ENCODE measurements at regions of chr12 and their contacts with region 1.

Region 1: GRCh38 chr12:52645120-52645761 is 6.8 kb downstream of the KRT2 start:
- DNase-seq: peak; percentile 2
- H3K4me3 ChIP-seq: no peak overlapping the region
- H3K27ac ChIP-seq: no peak overlapping the region
- H3K4me1 ChIP-seq: no peaks in the 10 kb centered on the region
- H3K27me3 ChIP-seq: peaks cover 2% of the 10 kb centered on the region
- CTCF ChIP-seq: no peak

Region 2: GRCh38 chr12:52543985-52544883 is 101.0 kb before region 1 on chr12:
- CTCF ChIA-PET with region 1: no interaction called
- dilution Hi-C with region 1: loop called (anchors 5 kb)
- in situ Hi-C with region 1: no loop called
- intact Hi-C with region 1: no loop called
- DNase-seq: no peak
- H3K4me3 ChIP-seq: no peak overlapping the region
- H3K27ac ChIP-seq: no peak overlapping the region
- H3K4me1 ChIP-seq: peaks cover 14% of the 10 kb centered on the region
- H3K27me3 ChIP-seq: no peaks in the 10 kb centered on the region
- CTCF ChIP-seq: peak; percentile 20 to 26

Region 3: GRCh38 chr12:52598966-52599365 is 46.3 kb before region 1 on chr12:
- CTCF ChIA-PET with region 1: no interaction called
- dilution Hi-C with region 1: loop called (anchors 10 kb)
- in situ Hi-C with region 1: no loop called
- intact Hi-C with region 1: no loop called
- DNase-seq: no peak
- H3K4me3 ChIP-seq: no peak overlapping the region
- H3K27ac ChIP-seq: no peak overlapping the region
- H3K4me1 ChIP-seq: no peaks in the 10 kb centered on the region
- H3K27me3 ChIP-seq: peaks cover 14% of the 10 kb centered on the region
- CTCF ChIP-seq: no peak

Region 4: DNA sequence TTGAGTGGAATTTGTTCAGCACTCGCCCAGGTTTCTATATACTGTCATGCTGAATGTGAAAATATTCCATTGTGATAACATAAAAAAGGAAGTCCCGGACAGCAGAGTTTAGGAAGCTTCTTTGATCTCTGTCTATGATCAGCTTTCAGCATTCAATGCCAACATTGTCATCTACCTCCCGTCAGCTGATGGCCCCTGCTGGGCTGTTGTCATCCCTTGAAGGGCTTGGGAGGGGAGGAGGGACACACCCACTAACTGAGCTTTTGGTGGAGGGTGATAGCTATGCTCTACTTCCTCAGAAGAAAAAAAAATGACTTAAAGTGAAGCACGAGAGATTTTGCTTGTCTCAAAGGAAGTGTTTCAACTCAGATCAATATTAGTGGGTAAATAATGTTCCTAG is 62.8 kb after region 1 on chr12:
- CTCF ChIA-PET with region 1: no interaction called
- dilution Hi-C with region 1: loop called (anchors 5 kb)
- in situ Hi-C with region 1: no loop called
- intact Hi-C with region 1: no loop called
- DNase-seq: no peak
- H3K4me3 ChIP-seq: no peak overlapping the region
- H3K27ac ChIP-seq: no peak overlapping the region
- H3K4me1 ChIP-seq: no peaks in the 10 kb centered on the region
- H3K27me3 ChIP-seq: peaks cover 2% of the 10 kb centered on the region
- CTCF ChIP-seq: no peak

Region 5: GRCh38 chr12:52980693-52981423 is 335.6 kb after region 1 on chr12:
- CTCF ChIA-PET with region 1: no interaction called
- dilution Hi-C with region 1: no loop called
- in situ Hi-C with region 1: no loop called
- intact Hi-C with region 1: no loop called
- DNase-seq: peak; percentile 80
- H3K4me3 ChIP-seq: no peak overlapping the region
- H3K27ac ChIP-seq: no peak overlapping the region
- H3K4me1 ChIP-seq: no peaks in the 10 kb centered on the region
- H3K27me3 ChIP-seq: no peaks in the 10 kb centered on the region
- CTCF ChIP-seq: peak; percentile 99

Measured in mammary epithelial cell (primary cell).